B cell (primary cell): ENCODE measurements at regions of chr5 and their contacts with region 1.

Region 1: DNA sequence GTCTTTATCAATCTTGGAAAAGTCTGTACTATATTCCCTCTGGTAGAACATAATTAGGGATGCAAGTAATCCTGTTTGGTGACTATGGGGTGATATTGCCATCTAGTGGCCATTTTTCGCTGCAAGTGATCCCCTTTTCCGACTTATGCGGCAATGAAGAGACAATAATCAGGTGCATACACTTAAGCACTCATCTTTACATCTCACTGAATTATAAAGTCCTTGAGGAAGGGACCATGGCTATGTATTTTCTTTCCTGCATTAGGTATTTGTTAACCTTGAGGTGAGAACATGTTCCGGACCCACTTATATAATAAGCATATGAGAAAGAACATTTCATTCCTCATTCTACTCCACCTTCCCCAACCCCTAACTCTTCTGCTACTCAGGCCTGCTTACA is 19.6 kb upstream of the LIX1 start:
- DNase-seq: peak; percentile 76
- ATAC-seq: peak; percentile 39
- H3K4me3 ChIP-seq: no peak overlapping the region
- H3K4me3 Mint-ChIP-seq: no peak overlapping the region
- H3K27ac ChIP-seq: no peak overlapping the region
- H3K27ac Mint-ChIP-seq: no peak overlapping the region
- H3K4me1 ChIP-seq: peaks cover under 1 to 2% of the 10 kb centered on the region in 2 donors
- H3K4me1 Mint-ChIP-seq: no peaks in the 10 kb centered on the region
- H3K27me3 ChIP-seq: no peaks in the 10 kb centered on the region
- H3K27me3 Mint-ChIP-seq: no peaks in the 10 kb centered on the region
- CTCF ChIP-seq: peak; percentile 96

Region 2: GRCh38 chr5:96752341-96753016 is 409.6 kb before region 1 on chr5:
- CTCF ChIA-PET with region 1: interaction called, 214 read pairs
- POLR2A ChIA-PET with region 1: interaction called, 3 read pairs
- intact Hi-C with region 1: loop called (anchors 1 kb)
- DNase-seq: peak; percentile 72
- ATAC-seq: no peak
- H3K4me3 ChIP-seq: no peak overlapping the region
- H3K4me3 Mint-ChIP-seq: no peak overlapping the region
- H3K27ac ChIP-seq: no peak overlapping the region
- H3K27ac Mint-ChIP-seq: no peak overlapping the region
- H3K4me1 ChIP-seq: no peaks in the 10 kb centered on the region
- H3K4me1 Mint-ChIP-seq: no peaks in the 10 kb centered on the region
- H3K27me3 ChIP-seq: no peaks in the 10 kb centered on the region
- H3K27me3 Mint-ChIP-seq: no peaks in the 10 kb centered on the region
- CTCF ChIP-seq: peak; percentile 85

Region 3: GRCh38 chr5:96863114-96863513 is 298.9 kb before region 1 on chr5:
- CTCF ChIA-PET with region 1: interaction called, 288 read pairs
- POLR2A ChIA-PET with region 1: no interaction called
- intact Hi-C with region 1: no loop called
- DNase-seq: no peak
- ATAC-seq: no peak
- H3K4me3 ChIP-seq: no peak overlapping the region
- H3K4me3 Mint-ChIP-seq: no peak overlapping the region
- H3K27ac ChIP-seq: no peak overlapping the region
- H3K27ac Mint-ChIP-seq: no peak overlapping the region
- H3K4me1 ChIP-seq: peaks cover 0 to 7% of the 10 kb centered on the region in 2 donors
- H3K4me1 Mint-ChIP-seq: peaks cover 7% of the 10 kb centered on the region
- H3K27me3 ChIP-seq: no peaks in the 10 kb centered on the region
- H3K27me3 Mint-ChIP-seq: peaks cover 5% of the 10 kb centered on the region
- CTCF ChIP-seq: no peak

Region 4: DNA sequence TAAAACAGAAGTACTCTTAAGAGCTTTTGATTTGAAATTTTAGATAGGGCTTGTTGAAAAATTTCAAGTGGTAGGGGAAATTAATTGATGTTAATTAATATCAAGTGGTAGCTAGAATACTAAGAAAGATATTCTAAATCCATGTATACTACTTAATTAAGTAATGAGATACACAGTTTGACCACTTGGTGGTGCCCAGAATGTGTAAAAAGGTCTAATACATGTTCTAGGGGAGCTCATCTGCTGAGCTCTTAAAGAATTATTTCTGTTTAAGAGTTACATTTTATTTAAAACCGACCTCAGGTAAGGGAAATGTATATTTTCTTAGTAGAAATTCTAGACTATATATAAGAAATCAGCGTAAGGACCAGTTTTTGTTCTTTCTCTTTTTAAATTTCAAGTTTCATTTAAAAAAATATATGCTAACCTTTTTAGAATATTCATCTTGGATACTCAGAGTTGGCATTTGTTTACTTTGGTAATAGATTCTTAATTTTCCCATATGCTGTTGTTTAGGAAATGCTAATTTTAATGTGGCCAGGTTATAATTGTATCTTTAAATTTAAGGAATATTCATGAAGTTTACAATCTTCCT is 164.7 kb before region 1 on chr5:
- CTCF ChIA-PET with region 1: interaction called, 96 read pairs
- POLR2A ChIA-PET with region 1: no interaction called
- intact Hi-C with region 1: loop called (anchors 1 kb)
- DNase-seq: peak; percentile 61
- ATAC-seq: peak; percentile 66
- H3K4me3 ChIP-seq: no peak overlapping the region
- H3K4me3 Mint-ChIP-seq: no peak overlapping the region
- H3K27ac ChIP-seq: no peak overlapping the region
- H3K27ac Mint-ChIP-seq: no peak overlapping the region
- H3K4me1 ChIP-seq: no peaks in the 10 kb centered on the region
- H3K4me1 Mint-ChIP-seq: peaks cover 5% of the 10 kb centered on the region
- H3K27me3 ChIP-seq: no peaks in the 10 kb centered on the region
- H3K27me3 Mint-ChIP-seq: no peaks in the 10 kb centered on the region
- CTCF ChIP-seq: peak; percentile 78

Region 5: GRCh38 chr5:97149709-97150108 is 12.3 kb before region 1 on chr5:
- CTCF ChIA-PET with region 1: interaction called, 14 read pairs
- POLR2A ChIA-PET with region 1: no interaction called
- intact Hi-C with region 1: no loop called
- DNase-seq: no peak
- ATAC-seq: no peak
- H3K4me3 ChIP-seq: no peak overlapping the region
- H3K4me3 Mint-ChIP-seq: no peak overlapping the region
- H3K27ac ChIP-seq: no peak overlapping the region
- H3K27ac Mint-ChIP-seq: no peak overlapping the region
- H3K4me1 ChIP-seq: no peaks in the 10 kb centered on the region
- H3K4me1 Mint-ChIP-seq: no peaks in the 10 kb centered on the region
- H3K27me3 ChIP-seq: no peaks in the 10 kb centered on the region
- H3K27me3 Mint-ChIP-seq: no peaks in the 10 kb centered on the region
- CTCF ChIP-seq: no peak

Region 6: DNA sequence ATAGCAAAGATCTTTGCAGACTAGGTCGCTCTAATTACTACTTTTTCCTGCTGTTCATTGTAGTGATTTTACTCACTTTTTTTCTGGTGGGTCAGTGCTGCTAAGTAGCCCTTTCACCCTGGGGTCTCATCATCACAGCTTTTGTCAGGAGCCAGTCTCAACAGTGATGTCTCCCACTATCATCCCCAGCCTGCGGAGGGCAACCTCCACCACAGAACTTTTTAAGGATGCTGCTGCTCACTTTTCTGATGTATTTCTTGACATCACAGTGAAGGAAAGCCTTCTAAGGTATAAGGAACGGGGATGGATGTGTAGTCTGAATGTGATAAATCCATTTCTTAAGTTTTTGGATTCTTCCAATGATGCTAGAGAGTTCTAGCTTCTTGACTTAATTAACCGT is 263.5 kb after region 1 on chr5:
- CTCF ChIA-PET with region 1: no interaction called
- POLR2A ChIA-PET with region 1: no interaction called
- intact Hi-C with region 1: no loop called
- DNase-seq: no peak
- ATAC-seq: no peak
- H3K4me3 ChIP-seq: no peak overlapping the region
- H3K4me3 Mint-ChIP-seq: no peak overlapping the region
- H3K27ac ChIP-seq: no peak overlapping the region
- H3K27ac Mint-ChIP-seq: no peak overlapping the region
- H3K4me1 ChIP-seq: no peaks in the 10 kb centered on the region
- H3K4me1 Mint-ChIP-seq: no peaks in the 10 kb centered on the region
- H3K27me3 ChIP-seq: no peaks in the 10 kb centered on the region
- H3K27me3 Mint-ChIP-seq: no peaks in the 10 kb centered on the region
- CTCF ChIP-seq: no peak